Mammary epithelial cell (primary cell): ENCODE measurements at regions of chr12 and their contacts with region 1.

Region 1: GRCh38 chr12:32761716-32762115 is 6.0 kb upstream of the YARS2 start:
- DNase-seq: no peak
- H3K4me3 ChIP-seq: no peak overlapping the region
- H3K27ac ChIP-seq: no peak overlapping the region
- H3K4me1 ChIP-seq: peaks cover 2% of the 10 kb centered on the region
- H3K27me3 ChIP-seq: no peaks in the 10 kb centered on the region
- CTCF ChIP-seq: no peak

Region 2: GRCh38 chr12:33994857-33995808 is 1233.4 kb after region 1 on chr12:
- CTCF ChIA-PET with region 1: no interaction called
- dilution Hi-C with region 1: no loop called
- in situ Hi-C with region 1: loop called (anchors 10 to 25 kb)
- intact Hi-C with region 1: no loop called
- DNase-seq: peak; percentile 75
- H3K4me3 ChIP-seq: no peak overlapping the region
- H3K27ac ChIP-seq: peak overlapping the region; percentile 20
- H3K4me1 ChIP-seq: peaks cover 15% of the 10 kb centered on the region
- H3K27me3 ChIP-seq: no peaks in the 10 kb centered on the region
- CTCF ChIP-seq: no peak